ENCODE measurements at regions of chr21 and their contacts with region 1.

Region 1: GRCh38 chr21:36040389-36040788 is 19.9 kb downstream of the SETD4 start:
- DNase-seq: no peak
- ATAC-seq: no peak
- H3K4me3 Mint-ChIP-seq: no peak overlapping the region
- H3K27ac Mint-ChIP-seq: no peak overlapping the region
- H3K4me1 Mint-ChIP-seq: no peaks in the 10 kb centered on the region
- H3K27me3 Mint-ChIP-seq: no peaks in the 10 kb centered on the region
- CTCF ChIP-seq: no peak

Region 2: GRCh38 chr21:36015045-36015444 is 25.3 kb before region 1 on chr21:
- CTCF ChIA-PET with region 1: no interaction called
- POLR2A ChIA-PET with region 1: no interaction called
- intact Hi-C with region 1: no loop called
- DNase-seq: no peak
- ATAC-seq: no peak
- H3K4me3 Mint-ChIP-seq: no peak overlapping the region
- H3K27ac Mint-ChIP-seq: no peak overlapping the region
- H3K4me1 Mint-ChIP-seq: no peaks in the 10 kb centered on the region
- H3K27me3 Mint-ChIP-seq: peaks cover 18% of the 10 kb centered on the region
- CTCF ChIP-seq: no peak

Region 3: DNA sequence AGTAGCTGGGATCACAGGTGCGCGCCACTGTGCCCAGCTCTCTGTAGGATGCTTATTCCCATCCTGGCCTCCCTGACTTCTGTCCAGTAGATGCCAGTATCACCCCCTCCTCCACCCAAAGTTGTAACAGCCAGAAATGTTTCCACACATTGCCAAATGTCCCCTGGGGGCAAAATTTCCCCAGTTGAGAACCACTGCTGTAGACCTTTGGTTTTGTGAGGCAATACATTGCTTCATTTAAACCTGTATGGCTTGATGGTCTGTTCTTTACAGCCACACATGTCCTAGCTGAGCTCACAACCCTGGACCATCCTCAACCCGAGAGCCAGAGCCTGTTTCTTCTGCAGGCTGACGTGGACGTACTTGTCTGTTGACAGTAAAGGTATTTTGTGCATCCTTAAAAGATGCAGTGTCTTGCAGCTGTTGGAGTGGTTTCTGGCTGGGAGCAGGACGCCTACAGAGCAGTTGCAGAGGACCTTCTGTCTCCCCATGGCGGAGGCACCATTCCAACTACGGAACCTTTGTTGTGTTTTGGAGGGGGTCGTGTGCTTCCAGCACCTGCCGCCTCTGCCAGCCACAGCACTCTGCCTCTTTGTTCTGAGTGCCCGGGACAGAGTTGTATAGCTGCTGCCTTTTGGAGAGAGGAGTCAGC is 142.9 kb after region 1 on chr21:
- CTCF ChIA-PET with region 1: no interaction called
- POLR2A ChIA-PET with region 1: no interaction called
- intact Hi-C with region 1: no loop called
- DNase-seq: no peak
- ATAC-seq: no peak
- H3K4me3 Mint-ChIP-seq: no peak overlapping the region
- H3K27ac Mint-ChIP-seq: no peak overlapping the region
- H3K4me1 Mint-ChIP-seq: peaks cover 33% of the 10 kb centered on the region
- H3K27me3 Mint-ChIP-seq: no peaks in the 10 kb centered on the region
- CTCF ChIP-seq: no peak

Region 4: DNA sequence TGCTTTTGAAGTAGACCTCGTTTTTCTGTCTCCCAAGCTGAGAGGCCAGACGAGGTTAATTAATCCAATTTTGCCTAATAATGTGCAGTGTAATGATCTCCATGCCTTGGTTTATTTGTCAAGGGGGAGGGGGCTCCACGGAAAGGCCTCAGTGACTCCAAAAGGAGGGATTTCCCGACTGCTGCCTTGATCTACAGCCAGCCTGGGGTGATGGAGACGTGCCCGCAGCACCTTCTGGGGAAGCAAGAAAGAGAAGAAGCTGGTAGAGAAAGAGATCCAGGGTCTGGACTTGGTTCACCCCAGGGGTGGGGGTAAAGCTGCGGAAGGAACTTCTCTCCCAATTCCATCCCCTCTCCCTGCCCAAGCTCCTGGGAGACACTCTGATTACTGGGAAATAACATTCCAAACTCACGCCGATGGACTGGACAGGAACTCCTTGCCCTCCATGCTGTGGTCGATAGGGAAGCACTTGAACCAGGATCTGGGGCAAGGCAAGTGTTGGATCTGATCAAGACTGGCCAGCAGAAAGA is 614.5 kb after region 1 on chr21:
- CTCF ChIA-PET with region 1: no interaction called
- POLR2A ChIA-PET with region 1: interaction called, 12 read pairs
- intact Hi-C with region 1: no loop called
- DNase-seq: no peak
- ATAC-seq: no peak
- H3K4me3 Mint-ChIP-seq: no peak overlapping the region
- H3K27ac Mint-ChIP-seq: no peak overlapping the region
- H3K4me1 Mint-ChIP-seq: no peaks in the 10 kb centered on the region
- H3K27me3 Mint-ChIP-seq: peaks cover 11% of the 10 kb centered on the region
- CTCF ChIP-seq: no peak